MCF 10A (cell line): ENCODE measurements at regions of chr9 and their contacts with region 1.

Region 1: DNA sequence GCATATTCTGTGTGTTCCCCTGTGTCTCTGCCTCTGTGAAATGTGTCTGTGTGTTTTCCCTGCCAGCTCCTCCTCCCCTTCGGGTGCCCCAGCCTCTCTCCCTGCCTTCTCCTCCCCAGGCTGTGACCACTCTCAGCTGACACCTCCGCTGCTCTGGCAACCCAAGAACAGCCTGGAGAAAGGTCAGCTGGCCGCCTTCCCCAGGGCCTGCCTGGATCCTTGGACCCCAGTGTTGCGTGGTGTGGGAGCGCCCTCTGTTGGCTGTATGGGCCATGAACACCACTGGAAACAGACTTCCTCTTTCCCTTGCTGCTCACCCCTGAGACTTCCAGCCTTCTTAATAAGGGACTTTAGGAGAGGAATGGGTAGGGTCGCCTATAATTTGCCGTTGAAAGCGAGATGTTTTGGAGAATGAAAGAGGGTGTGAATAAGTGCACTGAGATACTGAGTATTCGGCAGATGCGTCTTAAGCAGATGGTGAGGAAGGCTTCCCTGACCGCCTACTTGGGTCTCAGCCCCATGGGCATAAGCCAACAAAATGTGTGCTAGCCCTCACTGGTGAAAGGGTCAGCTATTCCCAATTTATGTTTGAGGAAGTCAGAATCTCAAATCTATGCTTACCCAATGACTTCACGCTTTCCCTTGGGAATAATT is 114.9 kb upstream of the TRIM32 start:
- DNase-seq: peak; percentile 80
- H3K4me3 Mint-ChIP-seq: no peak overlapping the region
- H3K27ac Mint-ChIP-seq: no peak overlapping the region
- H3K4me1 Mint-ChIP-seq: peaks cover 4% of the 10 kb centered on the region
- H3K27me3 Mint-ChIP-seq: no peaks in the 10 kb centered on the region
- CTCF ChIP-seq: peak; percentile 95

Region 2: DNA sequence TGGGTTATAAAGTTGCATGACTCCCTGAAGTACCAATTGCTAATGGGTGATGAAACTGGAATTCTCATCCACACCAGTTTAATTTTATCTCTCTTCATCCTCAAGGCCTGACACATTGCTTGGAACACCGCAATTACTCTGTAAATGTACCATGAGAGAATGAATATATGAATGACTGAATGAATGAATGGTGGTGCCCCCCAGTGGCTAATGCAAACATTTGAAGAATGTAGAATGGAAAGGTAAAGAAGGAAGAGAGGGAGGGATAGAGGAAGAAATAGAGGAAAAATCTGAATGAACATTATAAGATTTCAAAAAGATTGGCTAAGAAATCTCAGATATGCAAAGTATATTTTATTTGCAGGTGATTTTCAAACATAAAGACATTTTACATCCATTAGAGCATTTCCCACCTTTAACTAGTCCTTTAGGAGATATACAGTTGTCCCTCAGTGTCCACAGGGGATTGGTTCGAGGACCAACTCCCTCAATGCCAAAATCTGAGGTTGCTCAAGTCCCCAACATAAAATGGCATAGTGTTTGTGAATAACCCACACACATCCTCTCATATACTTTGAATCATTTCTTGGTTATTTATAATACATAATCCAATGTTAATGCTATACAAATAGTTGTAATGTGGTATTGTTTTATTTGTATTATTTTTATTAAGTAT is 405.4 kb before region 1 on chr9:
- CTCF ChIA-PET with region 1: interaction called, 17 read pairs
- POLR2A ChIA-PET with region 1: no interaction called
- intact Hi-C with region 1: loop called (anchors 5 kb)
- DNase-seq: no peak
- H3K4me3 Mint-ChIP-seq: no peak overlapping the region
- H3K27ac Mint-ChIP-seq: no peak overlapping the region
- H3K4me1 Mint-ChIP-seq: peaks cover 16% of the 10 kb centered on the region
- H3K27me3 Mint-ChIP-seq: no peaks in the 10 kb centered on the region
- CTCF ChIP-seq: peak; percentile 19

Region 3: GRCh38 chr9:116494815-116495634 is 77.2 kb before region 1 on chr9:
- CTCF ChIA-PET with region 1: interaction called, 28 read pairs
- POLR2A ChIA-PET with region 1: no interaction called
- intact Hi-C with region 1: loop called (anchors 1 kb)
- DNase-seq: peak; percentile 61
- H3K4me3 Mint-ChIP-seq: no peak overlapping the region
- H3K27ac Mint-ChIP-seq: no peak overlapping the region
- H3K4me1 Mint-ChIP-seq: peaks cover 5% of the 10 kb centered on the region
- H3K27me3 Mint-ChIP-seq: no peaks in the 10 kb centered on the region
- CTCF ChIP-seq: peak; percentile 61

Region 4: GRCh38 chr9:116555556-116556155 is 16.6 kb before region 1 on chr9:
- CTCF ChIA-PET with region 1: interaction called, 20 read pairs
- POLR2A ChIA-PET with region 1: no interaction called
- intact Hi-C with region 1: no loop called
- DNase-seq: no peak
- H3K4me3 Mint-ChIP-seq: no peak overlapping the region
- H3K27ac Mint-ChIP-seq: no peak overlapping the region
- H3K4me1 Mint-ChIP-seq: no peaks in the 10 kb centered on the region
- H3K27me3 Mint-ChIP-seq: no peaks in the 10 kb centered on the region
- CTCF ChIP-seq: no peak

Region 5: GRCh38 chr9:116661037-116661954 is 89.1 kb after region 1 on chr9:
- CTCF ChIA-PET with region 1: interaction called, 7 read pairs
- POLR2A ChIA-PET with region 1: no interaction called
- intact Hi-C with region 1: loop called (anchors 2 kb)
- DNase-seq: peak; percentile 73
- H3K4me3 Mint-ChIP-seq: no peak overlapping the region
- H3K27ac Mint-ChIP-seq: no peak overlapping the region
- H3K4me1 Mint-ChIP-seq: peaks cover 9% of the 10 kb centered on the region
- H3K27me3 Mint-ChIP-seq: no peaks in the 10 kb centered on the region
- CTCF ChIP-seq: peak; percentile 76